ENCODE measurements at regions of chr18 and their contacts with region 1.

Region 1: GRCh38 chr18:51390702-51391101 is 193.2 kb upstream of the MEX3C start:
- DNase-seq: no peak
- H3K4me3 ChIP-seq: no peak overlapping the region
- H3K27ac ChIP-seq: no peak overlapping the region
- H3K4me1 ChIP-seq: no peaks in the 10 kb centered on the region
- H3K27me3 ChIP-seq: no peaks in the 10 kb centered on the region
- CTCF ChIP-seq: no peak
- EP300 ChIP-seq: no peak
- POLR2A ChIP-seq: no peak

Region 2: DNA sequence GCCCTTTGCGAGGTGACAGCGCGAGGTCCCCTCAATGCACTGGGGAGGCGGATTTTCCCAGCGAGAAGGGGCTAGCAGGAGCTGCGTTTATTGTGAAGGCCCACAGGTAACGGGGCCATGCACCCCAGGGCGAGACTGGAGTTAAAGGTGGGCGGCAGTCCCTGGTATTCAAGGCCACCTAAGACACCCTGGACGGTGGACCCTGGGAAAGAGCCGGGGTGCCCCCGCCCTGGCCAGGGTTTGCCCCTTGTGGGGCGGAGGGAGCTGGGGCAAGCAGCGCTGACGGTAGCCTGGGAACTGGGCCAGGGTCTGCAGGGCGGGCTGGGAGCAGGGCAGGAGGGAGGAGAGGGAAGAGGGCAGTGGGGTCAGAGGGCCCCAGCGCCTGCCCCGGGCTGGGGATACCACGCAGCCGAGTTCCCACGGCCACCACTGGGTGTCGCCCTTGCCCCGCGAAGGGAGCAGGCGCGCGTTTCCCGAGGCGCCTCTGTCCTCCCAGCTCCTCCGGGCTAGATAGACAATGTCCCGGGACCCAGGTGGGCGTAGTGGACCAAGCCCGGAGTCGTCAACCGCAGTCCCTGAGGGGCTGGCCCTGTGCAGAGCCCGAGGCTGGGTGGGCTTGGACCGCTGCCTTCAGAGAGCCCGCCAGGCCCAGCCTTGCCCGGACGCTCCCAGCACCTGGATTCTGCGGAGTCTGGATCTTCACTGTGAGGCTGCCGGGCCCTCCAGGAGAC is 280.5 kb before region 1 on chr18:
- in situ Hi-C with region 1: loop called (anchors 25 kb)
- intact Hi-C with region 1: no loop called
- DNase-seq: peak; percentile 69
- H3K4me3 ChIP-seq: peak overlapping the region in 1 of 4 donors; percentile 19
- H3K27ac ChIP-seq: no peak overlapping the region
- H3K4me1 ChIP-seq: peaks cover 0 to 5% (median 1%) of the 10 kb centered on the region in 4 donors
- H3K27me3 ChIP-seq: no peaks in the 10 kb centered on the region
- CTCF ChIP-seq: peak; percentile 81 to 97 (median 95)
- EP300 ChIP-seq: no peak
- POLR2A ChIP-seq: no peak

Measured in transverse colon (tissue), 4 donors.